Gastrocnemius medialis (tissue), 4 donors: ENCODE measurements at regions of chr3 and their contacts with region 1.

Region 1: DNA sequence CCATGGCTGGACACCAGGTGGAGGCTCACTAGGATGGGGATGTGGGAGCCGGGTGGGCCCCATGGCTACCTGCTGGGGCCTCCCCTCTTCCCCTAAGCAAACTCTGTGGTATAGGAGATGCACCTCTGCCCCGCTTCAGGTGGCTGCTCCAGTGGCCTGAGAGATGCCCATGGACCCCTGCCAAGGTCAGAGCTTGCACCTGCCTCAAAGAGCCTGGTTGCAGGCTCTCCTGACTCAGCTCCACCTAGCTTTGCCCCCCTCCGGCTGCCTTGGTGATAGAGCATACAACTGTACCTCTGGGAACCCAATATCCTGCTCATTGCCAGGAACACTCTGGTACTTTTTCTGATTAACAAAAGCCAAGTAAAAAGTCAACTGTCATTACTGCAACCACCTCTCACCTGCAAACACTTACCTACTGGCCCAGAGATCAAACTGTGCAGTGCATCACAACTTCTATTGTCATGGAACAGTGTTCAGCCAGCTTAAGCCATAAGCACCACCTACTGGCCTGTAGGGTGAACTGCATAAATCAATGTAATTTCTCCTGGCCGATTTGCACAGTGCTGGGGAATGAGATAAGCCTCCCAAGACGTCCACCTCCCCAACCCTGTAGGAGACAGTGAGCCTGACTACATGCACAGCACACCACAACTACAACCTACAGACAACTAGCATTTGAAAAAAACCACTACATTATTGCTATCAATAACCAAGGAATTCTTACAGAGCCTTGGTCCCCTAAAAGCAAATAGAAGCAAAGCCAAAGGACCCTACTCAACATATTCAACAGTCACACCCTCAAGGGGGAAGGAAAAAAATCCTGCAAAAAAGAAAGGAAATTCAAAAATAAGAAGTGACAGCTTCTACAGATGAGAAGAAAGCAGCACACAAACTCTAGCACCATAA is 352.4 kb upstream of the ARHGEF26 start:
- DNase-seq: no peak
- ATAC-seq: no peak
- H3K4me3 ChIP-seq: no peak overlapping the region
- H3K27ac ChIP-seq: no peak overlapping the region
- H3K4me1 ChIP-seq: no peaks in the 10 kb centered on the region
- H3K27me3 ChIP-seq: no peaks in the 10 kb centered on the region
- CTCF ChIP-seq: peak in 4 of 5 experiments; percentile 37 to 63 (median 57)
- POLR2A ChIP-seq: no peak

Region 2: DNA sequence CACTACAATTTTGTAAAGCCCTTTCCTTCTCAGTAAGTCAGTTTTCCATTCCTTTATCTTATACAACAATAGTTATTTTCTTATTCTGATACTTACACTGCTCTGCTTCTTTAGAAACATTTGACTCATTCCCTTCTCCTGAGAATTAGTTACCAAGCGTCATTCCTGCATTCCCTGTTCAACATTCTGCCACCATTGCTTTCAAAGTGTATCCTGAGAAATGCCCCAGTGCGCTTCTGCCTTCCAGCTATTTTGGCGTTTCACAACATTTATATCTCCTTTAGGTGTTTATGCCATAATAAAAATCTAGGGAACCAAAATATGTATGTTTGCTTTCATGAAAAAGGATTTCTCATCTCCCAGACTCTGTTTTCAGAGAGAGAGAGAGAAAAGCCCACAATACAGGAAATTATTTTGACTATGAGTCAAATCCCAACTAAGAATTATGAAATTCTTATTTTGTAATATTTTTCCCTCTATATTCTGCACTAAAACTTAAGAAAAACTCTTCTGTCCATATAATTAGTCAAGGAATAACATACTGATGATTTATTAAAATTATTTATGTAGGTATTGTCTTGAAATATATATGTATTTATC is 725.0 kb before region 1 on chr3:
- in situ Hi-C with region 1: loop called (anchors 5 to 25 kb)
- intact Hi-C with region 1: loop called (anchors 5 kb)
- DNase-seq: no peak
- ATAC-seq: no peak
- H3K4me3 ChIP-seq: no peak overlapping the region
- H3K27ac ChIP-seq: no peak overlapping the region
- H3K4me1 ChIP-seq: no peaks in the 10 kb centered on the region
- H3K27me3 ChIP-seq: no peaks in the 10 kb centered on the region
- CTCF ChIP-seq: no peak
- POLR2A ChIP-seq: no peak

Region 3: GRCh38 chr3:153688301-153689120 is 80.3 kb before region 1 on chr3:
- in situ Hi-C with region 1: no loop called
- intact Hi-C with region 1: no loop called
- DNase-seq: no peak
- ATAC-seq: no peak
- H3K4me3 ChIP-seq: no peak overlapping the region
- H3K27ac ChIP-seq: no peak overlapping the region
- H3K4me1 ChIP-seq: no peaks in the 10 kb centered on the region
- H3K27me3 ChIP-seq: no peaks in the 10 kb centered on the region
- CTCF ChIP-seq: no peak
- POLR2A ChIP-seq: no peak